H1 (cell line): ENCODE measurements at regions of chr17 and their contacts with region 1.

Region 1: GRCh38 chr17:73371285-73371684 is 59.5 kb upstream of the CDC42EP4 start:
- DNase-seq: no peak
- H3K4me3 ChIP-seq: no peak overlapping the region
- H3K27ac ChIP-seq: no peak overlapping the region
- H3K4me1 ChIP-seq: peaks cover 0 to 7% (median 2%) of the 10 kb centered on the region in 4 experiments; a peak in 4 of 7 replicates
- H3K27me3 ChIP-seq: no peaks in the 10 kb centered on the region
- CTCF ChIP-seq: no peak
- EP300 ChIP-seq: no peak
- POLR2A ChIP-seq: no peak
- RAD21 ChIP-seq: no peak

Region 2: DNA sequence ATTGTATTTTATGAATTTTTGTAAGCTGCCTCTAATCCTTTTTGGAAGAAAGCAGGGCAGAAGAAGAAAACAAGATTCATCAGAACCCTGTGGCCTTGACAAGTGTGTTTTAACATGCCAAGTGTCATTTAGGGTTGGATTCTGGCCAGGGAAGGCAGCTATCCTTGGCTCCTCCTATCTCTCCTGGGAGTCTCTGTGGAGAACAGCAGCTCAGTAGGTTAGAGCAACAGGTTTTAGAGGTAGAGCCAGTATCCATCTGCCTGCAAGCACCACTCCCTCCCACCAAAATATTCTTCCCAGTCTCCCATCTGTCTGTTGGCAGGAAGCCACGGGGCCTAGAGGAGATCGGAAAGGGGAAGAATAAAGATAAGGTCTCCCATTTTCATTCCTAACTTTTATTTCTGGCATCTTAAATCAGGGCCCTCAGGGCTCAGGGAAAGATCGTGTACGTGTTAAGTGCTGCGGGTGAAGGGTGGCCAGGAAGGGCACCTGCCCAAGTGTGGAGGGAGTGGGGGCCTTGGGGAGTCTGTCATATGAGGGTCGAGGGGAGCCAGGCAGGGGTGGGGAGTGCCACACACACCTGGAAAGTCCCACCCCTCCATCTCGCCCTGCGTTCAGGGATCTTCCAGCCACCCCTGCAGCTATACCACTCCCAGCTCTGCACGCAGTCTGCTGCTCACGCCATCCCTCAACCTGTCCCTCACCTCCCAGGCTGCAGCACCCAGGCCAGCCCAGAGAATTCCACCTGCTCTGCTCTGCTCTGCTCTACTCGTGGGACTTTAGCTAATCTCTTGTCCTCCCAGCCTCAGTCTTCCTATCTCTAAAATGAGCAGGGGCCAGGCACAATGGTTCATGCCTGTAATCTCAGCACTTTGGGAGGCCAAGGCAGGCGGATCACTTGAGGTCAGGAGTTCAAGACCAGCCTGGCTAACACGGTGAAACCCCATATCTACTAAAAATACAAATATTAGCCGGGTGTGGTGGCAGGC is 92.5 kb before region 1 on chr17:
- CTCF ChIA-PET with region 1: interaction called, 28 read pairs
- POLR2A ChIA-PET with region 1: no interaction called
- DNase-seq: no peak
- H3K4me3 ChIP-seq: no peak overlapping the region
- H3K27ac ChIP-seq: no peak overlapping the region
- H3K4me1 ChIP-seq: peaks cover 0 to 4% (median 2%) of the 10 kb centered on the region in 4 experiments; a peak in 4 of 7 replicates
- H3K27me3 ChIP-seq: no peaks in the 10 kb centered on the region
- CTCF ChIP-seq: no peak
- EP300 ChIP-seq: no peak
- POLR2A ChIP-seq: no peak
- RAD21 ChIP-seq: no peak

Region 3: GRCh38 chr17:73317513-73318426 is 53.5 kb before region 1 on chr17:
- CTCF ChIA-PET with region 1: interaction called, 52 read pairs
- POLR2A ChIA-PET with region 1: no interaction called
- DNase-seq: no peak
- H3K4me3 ChIP-seq: no peak overlapping the region
- H3K27ac ChIP-seq: no peak overlapping the region
- H3K4me1 ChIP-seq: peaks cover 0 to 9% (median 3%) of the 10 kb centered on the region in 4 experiments; a peak in 6 of 7 replicates
- H3K27me3 ChIP-seq: peaks cover 0 to 7% (median 3%) of the 10 kb centered on the region in 4 experiments; a peak in 3 of 7 replicates
- CTCF ChIP-seq: no peak
- EP300 ChIP-seq: no peak
- POLR2A ChIP-seq: no peak
- RAD21 ChIP-seq: no peak

Region 4: GRCh38 chr17:73342050-73342522 is 29.2 kb before region 1 on chr17:
- CTCF ChIA-PET with region 1: interaction called, 16 read pairs
- POLR2A ChIA-PET with region 1: interaction called, 4 read pairs
- DNase-seq: peak; percentile 70 to 78
- H3K4me3 ChIP-seq: peak overlapping the region in 2 of 4 experiments; percentile 14 to 17; a peak in 3 of 8 replicates
- H3K27ac ChIP-seq: peak overlapping the region; percentile 82
- H3K4me1 ChIP-seq: peaks cover 10 to 33% (median 27%) of the 10 kb centered on the region in 4 experiments
- H3K27me3 ChIP-seq: no peaks in the 10 kb centered on the region
- CTCF ChIP-seq: no peak
- EP300 ChIP-seq: peak in 1 of 2 experiments; percentile 86; a peak in 1 of 3 replicates
- POLR2A ChIP-seq: peak in 1 of 2 experiments; percentile 46; a peak in 1 of 3 replicates
- RAD21 ChIP-seq: peak in 1 of 2 experiments; percentile 12; a peak in 1 of 4 replicates

Region 5: GRCh38 chr17:73359987-73360410 is 11.3 kb before region 1 on chr17:
- CTCF ChIA-PET with region 1: interaction called, 19 read pairs
- POLR2A ChIA-PET with region 1: interaction called, 3 read pairs
- DNase-seq: peak; percentile 59 to 81
- H3K4me3 ChIP-seq: peak overlapping the region in 1 of 4 experiments; percentile 34; a peak in 3 of 8 replicates
- H3K27ac ChIP-seq: no peak overlapping the region
- H3K4me1 ChIP-seq: peaks cover 4 to 33% (median 26%) of the 10 kb centered on the region in 4 experiments
- H3K27me3 ChIP-seq: no peaks in the 10 kb centered on the region
- CTCF ChIP-seq: peak; percentile 33 to 42 (median 34)
- EP300 ChIP-seq: no peak
- POLR2A ChIP-seq: no peak
- RAD21 ChIP-seq: peak; percentile 23 to 58; a peak in 3 of 4 replicates

Region 6: GRCh38 chr17:73390221-73390620 is 18.9 kb after region 1 on chr17:
- CTCF ChIA-PET with region 1: interaction called, 15 read pairs
- POLR2A ChIA-PET with region 1: no interaction called
- DNase-seq: no peak
- H3K4me3 ChIP-seq: no peak overlapping the region
- H3K27ac ChIP-seq: no peak overlapping the region
- H3K4me1 ChIP-seq: no peaks in the 10 kb centered on the region; a peak in 2 of 7 replicates
- H3K27me3 ChIP-seq: no peaks in the 10 kb centered on the region
- CTCF ChIP-seq: no peak
- EP300 ChIP-seq: no peak
- POLR2A ChIP-seq: no peak
- RAD21 ChIP-seq: no peak